ENCODE measurements at regions of chr16 and their contacts with region 1.

Region 1: DNA sequence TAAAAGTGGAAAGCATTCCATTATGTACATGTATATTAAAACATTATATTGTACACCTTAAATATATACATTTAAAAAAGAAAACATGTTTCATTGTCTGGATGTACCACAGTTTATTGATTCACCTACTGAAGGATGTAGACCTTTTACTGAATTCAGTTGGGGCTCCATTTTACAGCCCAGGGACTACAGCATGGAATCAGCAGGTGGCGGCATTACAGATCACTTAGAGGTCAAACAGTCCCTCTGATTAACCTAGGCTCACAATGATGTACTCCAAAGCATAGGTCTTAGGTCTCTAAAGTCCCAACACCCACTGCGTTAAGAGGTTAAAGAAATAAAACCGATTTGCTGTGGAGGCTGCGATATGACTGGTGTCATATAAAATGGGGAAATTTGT is 490.9 kb downstream of the SHISA9 start:
- DNase-seq: no peak
- H3K4me3 ChIP-seq: no peak overlapping the region
- CTCF ChIP-seq: no peak
- POLR2A ChIP-seq: no peak

Region 2: GRCh38 chr16:13331919-13332318 is 60.4 kb before region 1 on chr16:
- intact Hi-C with region 1: no loop called
- DNase-seq: no peak
- H3K4me3 ChIP-seq: no peak overlapping the region
- CTCF ChIP-seq: no peak
- POLR2A ChIP-seq: no peak

Region 3: GRCh38 chr16:13421726-13422125 is 29.4 kb after region 1 on chr16:
- intact Hi-C with region 1: loop called (anchors 1 kb)
- DNase-seq: no peak
- H3K4me3 ChIP-seq: no peak overlapping the region
- CTCF ChIP-seq: no peak
- POLR2A ChIP-seq: no peak